CD8-positive, alpha-beta T cell (primary cell): ENCODE measurements at regions of chr21 and their contacts with region 1.

Region 1: DNA sequence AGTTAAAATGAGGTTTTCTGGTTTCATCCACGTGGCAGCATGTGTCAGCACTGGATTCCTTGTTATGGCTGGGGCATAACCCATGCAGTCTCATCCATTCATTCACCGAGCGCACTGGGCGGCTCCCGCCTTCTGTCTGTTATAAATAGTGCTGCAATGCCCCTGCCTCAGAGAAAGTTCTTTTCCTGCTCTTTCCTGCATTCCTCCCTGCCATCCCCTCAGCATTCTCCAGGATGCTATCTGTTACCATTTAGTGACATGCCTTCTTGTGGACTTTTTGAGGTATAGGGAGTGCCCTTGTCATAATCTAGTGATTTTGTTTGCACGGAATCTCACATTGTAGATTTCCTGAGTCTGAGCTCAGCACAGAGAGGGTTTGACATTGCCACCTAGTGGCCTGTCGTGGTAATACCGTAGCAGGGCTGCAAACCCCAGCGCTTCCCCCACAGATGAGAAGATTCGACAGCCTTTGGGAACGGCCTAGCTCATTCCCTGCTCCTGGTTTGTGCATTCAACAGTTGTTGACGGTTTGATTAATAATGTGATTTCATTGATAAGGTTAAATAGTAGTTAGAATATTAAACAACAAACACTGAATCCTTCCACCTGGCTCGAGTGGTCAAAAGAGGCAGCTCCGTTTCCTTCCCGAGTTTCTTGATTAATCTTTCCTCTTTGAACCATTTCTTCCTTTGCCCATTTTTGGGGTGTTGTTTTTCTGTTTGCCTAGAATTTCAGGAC is 46.3 kb downstream of the UMODL1 start:
- DNase-seq: peak; percentile 52 to 87 (median 77)
- ATAC-seq: peak; percentile 96
- H3K4me3 ChIP-seq: no peak overlapping the region
- H3K4me3 Mint-ChIP-seq: no peak overlapping the region
- H3K27ac ChIP-seq: no peak overlapping the region
- H3K27ac Mint-ChIP-seq: no peak overlapping the region
- H3K4me1 ChIP-seq: peaks cover 19% of the 10 kb centered on the region
- H3K4me1 Mint-ChIP-seq: peaks cover 19% of the 10 kb centered on the region
- H3K27me3 ChIP-seq: peaks cover 3 to 12% of the 10 kb centered on the region in 2 experiments
- H3K27me3 Mint-ChIP-seq: peaks cover 44% of the 10 kb centered on the region
- CTCF ChIP-seq: peak; percentile 96

Region 2: GRCh38 chr21:41612674-41613532 is 504.5 kb before region 1 on chr21:
- CTCF ChIA-PET with region 1: interaction called, 4 read pairs
- POLR2A ChIA-PET with region 1: no interaction called
- intact Hi-C with region 1: loop called (anchors 2 to 10 kb)
- DNase-seq: peak in 2 of 9 experiments; percentile 8 to 18
- ATAC-seq: no peak
- H3K4me3 ChIP-seq: no peak overlapping the region
- H3K4me3 Mint-ChIP-seq: no peak overlapping the region
- H3K27ac ChIP-seq: no peak overlapping the region
- H3K27ac Mint-ChIP-seq: no peak overlapping the region
- H3K4me1 ChIP-seq: no peaks in the 10 kb centered on the region
- H3K4me1 Mint-ChIP-seq: peaks cover 2% of the 10 kb centered on the region
- H3K27me3 ChIP-seq: no peaks in the 10 kb centered on the region
- H3K27me3 Mint-ChIP-seq: peaks cover 28% of the 10 kb centered on the region
- CTCF ChIP-seq: no peak

Region 3: DNA sequence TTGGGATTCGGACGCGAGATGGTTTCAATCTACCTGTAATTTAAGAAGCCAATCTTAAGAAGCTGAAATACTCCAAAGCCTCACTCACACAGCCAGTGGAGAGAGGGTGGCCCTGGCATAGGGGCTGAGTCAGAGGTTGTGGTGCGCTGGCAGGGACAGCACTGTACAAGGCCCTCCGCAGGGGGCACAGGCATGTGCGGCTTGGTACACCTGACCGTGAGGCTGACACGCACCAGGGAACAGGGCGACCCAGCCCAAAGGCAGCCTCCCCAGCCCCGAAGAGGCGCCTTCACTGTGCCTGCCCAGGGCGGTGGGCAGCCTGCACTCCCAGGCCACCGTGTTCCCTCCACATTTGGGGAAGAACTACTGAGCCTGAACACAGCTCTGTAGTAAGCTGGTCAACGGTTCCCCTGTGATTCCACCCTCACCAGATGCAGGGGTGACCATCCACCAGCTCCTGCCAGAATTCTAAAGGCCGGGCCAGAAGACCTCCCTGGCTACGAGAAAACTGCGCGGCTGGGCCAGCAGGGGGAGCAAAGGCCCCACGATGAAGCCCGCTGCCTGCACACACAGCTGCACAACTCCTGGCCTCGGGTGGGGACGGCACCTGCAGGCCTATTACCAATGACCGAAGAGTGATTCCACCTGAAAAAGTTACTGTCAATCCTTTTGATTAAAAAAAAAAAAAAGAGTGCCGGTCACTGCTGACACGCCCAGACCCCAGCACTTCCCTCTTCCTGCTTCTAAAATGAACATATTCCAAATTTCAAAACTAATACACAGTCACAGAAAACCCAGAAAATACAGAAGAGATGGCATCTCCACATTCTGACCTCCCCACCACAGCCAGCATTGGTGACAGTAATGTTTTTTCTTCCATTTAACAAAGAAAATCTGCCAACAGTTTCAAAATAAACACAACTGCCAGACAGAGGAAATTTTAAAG is 300.9 kb before region 1 on chr21:
- CTCF ChIA-PET with region 1: interaction called, 106 read pairs
- POLR2A ChIA-PET with region 1: interaction called, 6 read pairs
- intact Hi-C with region 1: loop called in 1 of 2 experiments (anchors 1 kb)
- DNase-seq: peak; percentile 31 to 75 (median 55)
- ATAC-seq: peak; percentile 78
- H3K4me3 ChIP-seq: no peak overlapping the region
- H3K4me3 Mint-ChIP-seq: no peak overlapping the region
- H3K27ac ChIP-seq: no peak overlapping the region
- H3K27ac Mint-ChIP-seq: no peak overlapping the region
- H3K4me1 ChIP-seq: peaks cover 6% of the 10 kb centered on the region
- H3K4me1 Mint-ChIP-seq: peaks cover 7% of the 10 kb centered on the region
- H3K27me3 ChIP-seq: no peaks in the 10 kb centered on the region
- H3K27me3 Mint-ChIP-seq: no peaks in the 10 kb centered on the region
- CTCF ChIP-seq: peak; percentile 72

Region 4: DNA sequence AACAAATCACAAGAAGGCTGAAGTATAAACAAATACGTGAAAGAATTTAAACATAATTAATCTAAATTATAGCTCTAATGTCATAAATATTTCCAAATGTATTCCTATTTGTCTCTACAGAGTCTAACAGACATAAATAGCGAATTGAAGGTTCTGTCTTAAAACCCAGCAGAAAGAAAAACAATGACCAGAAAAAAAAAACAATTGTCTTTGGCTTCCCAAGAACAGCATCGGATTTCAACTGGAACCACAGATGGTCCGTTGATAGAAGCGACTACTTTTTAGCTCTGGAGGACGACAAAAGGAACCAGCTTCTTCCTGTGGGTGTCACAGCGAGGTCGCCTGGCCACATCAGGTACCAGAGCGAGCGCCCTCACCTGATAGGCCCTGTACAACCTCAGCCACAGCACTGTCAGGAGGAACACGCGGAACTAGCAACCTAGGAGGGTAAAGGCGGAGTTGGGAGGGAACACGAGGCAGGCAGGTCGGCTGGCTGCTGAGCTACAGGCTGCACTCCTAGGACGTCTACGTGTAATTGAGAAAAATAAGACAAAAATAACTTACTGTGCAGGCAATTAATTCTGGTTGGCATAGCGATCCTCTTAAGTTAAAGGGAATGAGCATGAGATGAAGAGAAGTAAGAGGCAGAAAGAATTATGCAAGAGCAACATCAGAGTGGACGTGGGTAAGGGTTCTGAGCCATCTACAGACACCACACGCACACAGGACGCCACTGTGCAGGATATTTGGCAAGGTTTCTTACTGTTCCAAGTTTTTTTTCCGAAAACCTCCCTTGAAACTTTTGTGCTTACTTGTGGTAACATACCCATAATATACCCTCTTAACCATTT is 221.5 kb before region 1 on chr21:
- CTCF ChIA-PET with region 1: interaction called, 5 read pairs
- POLR2A ChIA-PET with region 1: no interaction called
- intact Hi-C with region 1: loop called in 1 of 2 experiments (anchors 5 kb)
- DNase-seq: peak; percentile 22 to 77 (median 61)
- ATAC-seq: peak; percentile 99
- H3K4me3 ChIP-seq: no peak overlapping the region
- H3K4me3 Mint-ChIP-seq: peak overlapping the region; percentile 57
- H3K27ac ChIP-seq: no peak overlapping the region
- H3K27ac Mint-ChIP-seq: peak overlapping the region; percentile 60
- H3K4me1 ChIP-seq: peaks cover 31% of the 10 kb centered on the region
- H3K4me1 Mint-ChIP-seq: peaks cover 17% of the 10 kb centered on the region
- H3K27me3 ChIP-seq: no peaks in the 10 kb centered on the region
- H3K27me3 Mint-ChIP-seq: no peaks in the 10 kb centered on the region
- CTCF ChIP-seq: no peak

Region 5: GRCh38 chr21:41926117-41926806 is 191.1 kb before region 1 on chr21:
- CTCF ChIA-PET with region 1: interaction called, 12 read pairs
- POLR2A ChIA-PET with region 1: no interaction called
- intact Hi-C with region 1: no loop called
- DNase-seq: peak in 8 of 9 experiments; percentile 14 to 81 (median 32)
- ATAC-seq: peak; percentile 91
- H3K4me3 ChIP-seq: peak overlapping the region; percentile 53 to 64
- H3K4me3 Mint-ChIP-seq: peak overlapping the region; percentile 96
- H3K27ac ChIP-seq: peak overlapping the region; percentile 72 to 89
- H3K27ac Mint-ChIP-seq: peak overlapping the region; percentile 99
- H3K4me1 ChIP-seq: peaks cover 42% of the 10 kb centered on the region
- H3K4me1 Mint-ChIP-seq: peaks cover 55% of the 10 kb centered on the region
- H3K27me3 ChIP-seq: no peaks in the 10 kb centered on the region
- H3K27me3 Mint-ChIP-seq: no peaks in the 10 kb centered on the region
- CTCF ChIP-seq: no peak

Region 6: GRCh38 chr21:42233067-42233961 is 115.9 kb after region 1 on chr21:
- CTCF ChIA-PET with region 1: no interaction called
- POLR2A ChIA-PET with region 1: no interaction called
- intact Hi-C with region 1: no loop called
- DNase-seq: peak; percentile 49 to 95 (median 72)
- ATAC-seq: peak; percentile 57
- H3K4me3 ChIP-seq: peak overlapping the region in 1 of 2 experiments; percentile 1
- H3K4me3 Mint-ChIP-seq: peak overlapping the region; percentile 70
- H3K27ac ChIP-seq: peak overlapping the region; percentile 69 to 93
- H3K27ac Mint-ChIP-seq: peak overlapping the region; percentile 95
- H3K4me1 ChIP-seq: peaks cover 80% of the 10 kb centered on the region
- H3K4me1 Mint-ChIP-seq: peaks cover 94% of the 10 kb centered on the region
- H3K27me3 ChIP-seq: no peaks in the 10 kb centered on the region
- H3K27me3 Mint-ChIP-seq: no peaks in the 10 kb centered on the region
- CTCF ChIP-seq: peak; percentile 50